ENCODE measurements at regions of chr1 and their contacts with region 1.

Region 1: DNA sequence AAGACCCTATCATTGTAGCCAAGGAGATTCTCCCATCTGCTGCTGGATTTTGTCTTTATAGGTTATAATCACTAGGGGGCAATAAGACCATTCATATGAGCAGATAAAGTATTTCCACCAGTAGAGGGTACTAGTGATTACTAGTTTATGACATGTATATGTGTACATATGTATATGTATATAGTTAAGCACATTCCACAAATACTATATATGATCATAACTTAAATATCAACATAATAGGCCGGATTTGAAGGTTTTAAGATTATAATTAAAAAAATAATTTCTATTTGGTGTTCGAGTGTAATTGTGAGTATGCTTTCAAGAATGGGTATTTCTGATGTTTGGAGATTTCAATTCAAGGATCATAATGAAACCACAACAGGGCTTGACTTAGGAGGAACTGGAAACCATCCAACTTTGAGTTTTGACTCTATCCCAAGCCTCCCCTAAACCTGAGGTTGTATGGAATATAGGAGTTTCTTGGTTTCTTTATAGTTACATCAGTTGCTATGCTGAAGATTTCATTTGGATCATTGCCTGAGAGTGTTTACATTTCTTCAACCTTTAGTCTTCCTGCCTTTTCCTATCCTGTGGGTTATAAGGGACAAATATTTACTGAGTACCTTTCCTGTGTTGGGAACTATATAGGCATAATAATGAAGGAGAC is 16.9 kb downstream of the TCEANC2 start:
- DNase-seq: peak in 3 of 14 experiments; percentile 70 to 74 (median 72)
- ATAC-seq: peak; percentile 94
- H3K4me3 ChIP-seq: no peak overlapping the region
- H3K4me3 Mint-ChIP-seq: no peak overlapping the region
- H3K27ac ChIP-seq: no peak overlapping the region
- H3K27ac Mint-ChIP-seq: no peak overlapping the region
- H3K4me1 ChIP-seq: no peaks in the 10 kb centered on the region
- H3K4me1 Mint-ChIP-seq: no peaks in the 10 kb centered on the region
- H3K27me3 ChIP-seq: no peaks in the 10 kb centered on the region
- H3K27me3 Mint-ChIP-seq: no peaks in the 10 kb centered on the region
- CTCF ChIP-seq: peak; percentile 99

Region 2: DNA sequence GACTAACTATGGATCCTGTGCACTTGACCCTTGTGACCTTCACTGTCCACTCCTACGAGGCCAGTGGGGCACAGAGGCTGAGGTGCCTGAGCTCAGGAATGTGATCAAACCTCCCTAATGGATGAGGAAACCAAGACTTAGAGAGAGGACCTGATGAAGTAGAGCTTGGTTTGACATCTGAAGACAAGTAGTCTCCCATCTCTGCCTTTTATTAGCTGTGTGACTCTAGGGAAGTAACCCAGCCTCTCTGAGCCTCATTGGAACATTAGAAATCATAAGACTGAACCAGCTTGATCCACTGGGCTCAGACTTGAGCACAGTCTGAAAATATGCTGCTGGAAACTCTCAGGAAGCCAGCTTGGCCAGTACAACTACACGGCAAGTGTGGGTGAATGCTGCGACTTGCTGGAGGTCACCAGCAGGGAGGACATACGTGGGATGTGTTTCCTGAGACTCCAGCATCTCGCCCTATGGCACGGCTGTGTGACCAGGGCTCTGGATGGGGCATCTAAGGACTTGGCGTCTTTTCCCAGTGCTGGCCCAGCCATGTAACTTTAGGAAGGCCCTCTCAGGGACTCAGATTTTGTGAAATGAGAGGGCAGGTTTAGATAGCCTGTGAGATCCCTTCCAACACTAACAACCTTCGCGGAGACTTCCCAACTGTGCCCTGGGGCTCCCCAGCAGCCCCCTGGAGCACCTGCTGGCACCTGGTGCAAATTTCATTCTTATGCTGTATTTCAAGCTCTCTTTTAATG is 72.0 kb after region 1 on chr1:
- CTCF ChIA-PET with region 1: no interaction called
- POLR2A ChIA-PET with region 1: no interaction called
- intact Hi-C with region 1: no loop called
- DNase-seq: no peak
- ATAC-seq: no peak
- H3K4me3 ChIP-seq: no peak overlapping the region
- H3K4me3 Mint-ChIP-seq: no peak overlapping the region
- H3K27ac ChIP-seq: no peak overlapping the region
- H3K27ac Mint-ChIP-seq: no peak overlapping the region
- H3K4me1 ChIP-seq: no peaks in the 10 kb centered on the region
- H3K4me1 Mint-ChIP-seq: no peaks in the 10 kb centered on the region
- H3K27me3 ChIP-seq: no peaks in the 10 kb centered on the region
- H3K27me3 Mint-ChIP-seq: no peaks in the 10 kb centered on the region
- CTCF ChIP-seq: no peak

Region 3: GRCh38 chr1:54671985-54672608 is 601.8 kb after region 1 on chr1:
- CTCF ChIA-PET with region 1: no interaction called
- POLR2A ChIA-PET with region 1: no interaction called
- intact Hi-C with region 1: loop called in 1 of 2 experiments (anchors 2 kb)
- DNase-seq: peak; percentile 26 to 76 (median 52)
- ATAC-seq: peak; percentile 84
- H3K4me3 ChIP-seq: no peak overlapping the region
- H3K4me3 Mint-ChIP-seq: no peak overlapping the region
- H3K27ac ChIP-seq: no peak overlapping the region
- H3K27ac Mint-ChIP-seq: no peak overlapping the region
- H3K4me1 ChIP-seq: peaks cover 3% of the 10 kb centered on the region
- H3K4me1 Mint-ChIP-seq: no peaks in the 10 kb centered on the region
- H3K27me3 ChIP-seq: no peaks in the 10 kb centered on the region
- H3K27me3 Mint-ChIP-seq: no peaks in the 10 kb centered on the region
- CTCF ChIP-seq: peak; percentile 80

Measured in CD4-positive, alpha-beta T cell (primary cell).